H1 (cell line): ENCODE measurements at regions of chr1 and their contacts with region 1.

Region 1: DNA sequence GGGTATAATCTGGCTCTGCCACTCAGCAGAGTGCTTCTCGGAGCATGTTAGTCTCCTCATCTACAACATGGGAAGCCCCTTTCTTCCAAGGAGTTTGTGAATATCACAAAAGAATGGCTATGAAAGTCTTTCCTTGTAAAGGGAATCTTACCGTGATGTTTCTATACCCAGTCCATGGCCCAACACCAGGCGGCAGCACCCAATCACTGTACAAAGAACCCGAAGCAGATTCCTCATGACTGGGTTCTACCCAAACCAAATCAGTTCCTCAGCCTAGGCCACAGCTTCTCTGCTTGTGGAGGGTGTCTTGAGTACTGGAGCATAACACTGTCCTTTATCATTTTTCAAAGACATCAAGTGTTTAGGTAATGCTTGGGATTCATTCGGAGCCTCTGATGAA is 16.6 kb upstream of the SLFNL1 start:
- DNase-seq: no peak
- H3K4me3 ChIP-seq: no peak overlapping the region
- H3K27ac ChIP-seq: no peak overlapping the region
- H3K4me1 ChIP-seq: no peaks in the 10 kb centered on the region; a peak in 2 of 7 replicates
- H3K27me3 ChIP-seq: peaks cover 0 to 3% (median 0%) of the 10 kb centered on the region in 4 experiments; a peak in 1 of 7 replicates
- CTCF ChIP-seq: peak; percentile 11 to 35 (median 26)
- EP300 ChIP-seq: no peak
- POLR2A ChIP-seq: no peak
- RAD21 ChIP-seq: peak; percentile 50 to 52

Region 2: DNA sequence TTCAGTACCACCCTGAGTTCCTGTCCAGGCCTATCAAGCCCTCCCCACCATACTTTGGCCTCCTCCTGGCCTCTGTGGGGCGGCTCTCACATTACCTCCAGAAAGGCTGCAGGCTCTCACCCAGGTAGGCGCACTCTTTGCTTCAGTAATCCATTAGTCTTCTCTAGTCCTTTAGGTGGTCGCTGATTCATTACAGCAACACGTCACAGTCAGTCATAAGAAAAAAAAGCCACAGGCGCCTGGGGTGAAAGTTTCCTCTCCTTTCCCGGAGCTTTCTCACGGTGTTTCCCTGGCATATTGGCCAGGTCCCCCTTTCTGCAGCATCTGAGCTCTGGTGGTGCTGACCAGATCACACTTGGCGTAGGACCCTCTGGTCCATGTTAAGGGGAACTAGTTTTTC is 28.6 kb before region 1 on chr1:
- CTCF ChIA-PET with region 1: no interaction called
- POLR2A ChIA-PET with region 1: no interaction called
- DNase-seq: no peak
- H3K4me3 ChIP-seq: no peak overlapping the region
- H3K27ac ChIP-seq: no peak overlapping the region
- H3K4me1 ChIP-seq: no peaks in the 10 kb centered on the region
- H3K27me3 ChIP-seq: no peaks in the 10 kb centered on the region
- CTCF ChIP-seq: no peak
- EP300 ChIP-seq: no peak
- POLR2A ChIP-seq: no peak
- RAD21 ChIP-seq: no peak

Region 3: GRCh38 chr1:41023279-41023990 is 14.7 kb before region 1 on chr1:
- CTCF ChIA-PET with region 1: interaction called, 20 read pairs
- POLR2A ChIA-PET with region 1: interaction called, 9 read pairs
- DNase-seq: no peak
- H3K4me3 ChIP-seq: no peak overlapping the region
- H3K27ac ChIP-seq: no peak overlapping the region
- H3K4me1 ChIP-seq: peaks cover 0 to 7% (median 4%) of the 10 kb centered on the region in 4 experiments; a peak in 4 of 7 replicates
- H3K27me3 ChIP-seq: peaks cover 0 to 13% (median 6%) of the 10 kb centered on the region in 4 experiments; a peak in 5 of 7 replicates
- CTCF ChIP-seq: peak; percentile 19 to 46 (median 43); a peak in 3 of 4 replicates
- EP300 ChIP-seq: no peak
- POLR2A ChIP-seq: no peak
- RAD21 ChIP-seq: peak; percentile 21 to 40; a peak in 3 of 4 replicates